Tibial artery (tissue), 4 donors: ENCODE measurements at regions of chr2 and their contacts with region 1.

Region 1: DNA sequence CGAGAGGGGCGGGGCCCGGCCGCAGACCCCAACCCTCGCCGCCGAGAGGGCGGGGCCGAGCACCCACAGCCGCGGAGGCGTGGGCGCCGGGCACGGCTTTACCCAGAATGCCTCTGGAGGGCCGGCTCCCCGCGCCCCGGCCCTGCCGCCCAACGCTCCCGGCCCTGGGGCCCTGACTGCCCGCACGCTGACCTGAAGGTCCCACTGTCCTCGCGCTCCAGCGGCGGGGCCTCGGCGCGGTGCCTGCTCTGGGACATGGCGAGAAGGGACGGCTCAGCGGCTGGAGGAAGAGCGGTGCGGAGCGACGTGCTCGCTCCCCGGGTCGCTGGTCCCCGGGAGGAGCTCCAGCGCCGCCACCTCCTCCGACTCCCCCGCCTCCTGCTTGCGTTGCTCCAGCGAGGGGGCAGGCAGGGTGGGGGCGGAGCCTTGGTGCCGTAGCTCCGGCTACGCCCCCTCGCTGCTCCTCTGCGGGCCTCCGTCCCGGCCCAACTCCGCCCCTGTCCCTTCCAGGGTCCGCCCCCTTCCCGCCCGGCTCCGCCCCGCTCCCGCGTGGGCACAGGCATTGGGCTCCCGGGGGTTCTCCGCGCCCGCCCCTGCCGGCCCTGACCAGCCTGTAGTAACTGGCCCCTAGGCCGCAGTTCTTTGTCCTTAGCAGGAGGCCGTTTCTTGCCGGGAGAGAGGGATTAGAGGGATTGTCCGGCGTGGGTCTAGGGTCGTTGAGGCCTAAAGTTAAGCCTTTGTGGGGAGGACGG is at the starts of genes PJVK and PRKRA:
- DNase-seq: peak; percentile 97 to 99
- H3K4me3 ChIP-seq: peak within 1 kb of the TSS; percentile 84 to 94
- H3K27ac ChIP-seq: peak within 1 kb of the TSS; percentile 96 to 97
- H3K4me1 ChIP-seq: peaks cover 0 to 37% (median 24%) of the 10 kb centered on the region in 4 donors
- H3K27me3 ChIP-seq: no peaks in the 10 kb centered on the region
- CTCF ChIP-seq: peak in 1 of 2 experiments; percentile 5

Region 2: GRCh38 chr2:178377046-178377445 is 73.9 kb before region 1 on chr2:
- intact Hi-C with region 1: no loop called
- DNase-seq: no peak
- H3K4me3 ChIP-seq: no peak overlapping the region
- H3K27ac ChIP-seq: no peak overlapping the region
- H3K4me1 ChIP-seq: no peaks in the 10 kb centered on the region
- H3K27me3 ChIP-seq: no peaks in the 10 kb centered on the region
- CTCF ChIP-seq: no peak

Region 3: GRCh38 chr2:178480227-178481181 is 29.6 kb after region 1 on chr2 and contains the start of gene PLEKHA3:
- intact Hi-C with region 1: loop called (anchors 2 kb)
- DNase-seq: peak; percentile 97 to 99
- H3K4me3 ChIP-seq: peak within 1 kb of the TSS; percentile 89 to 92
- H3K27ac ChIP-seq: peak within 1 kb of the TSS; percentile 90 to 91
- H3K4me1 ChIP-seq: peaks cover 0 to 63% (median 44%) of the 10 kb centered on the region in 4 donors
- H3K27me3 ChIP-seq: no peaks in the 10 kb centered on the region
- CTCF ChIP-seq: no peak

Region 4: GRCh38 chr2:178522950-178523595 is 72.1 kb after region 1 on chr2:
- intact Hi-C with region 1: loop called (anchors 2 kb)
- DNase-seq: peak; percentile 75 to 89
- H3K4me3 ChIP-seq: peak overlapping the region; percentile 63 to 64
- H3K27ac ChIP-seq: peak overlapping the region; percentile 61 to 77
- H3K4me1 ChIP-seq: peaks cover 0 to 10% (median 0%) of the 10 kb centered on the region in 4 donors
- H3K27me3 ChIP-seq: no peaks in the 10 kb centered on the region
- CTCF ChIP-seq: peak; percentile 52 to 55